K562 (cell line): ENCODE measurements at regions of chr12 and their contacts with region 1.

Region 1: DNA sequence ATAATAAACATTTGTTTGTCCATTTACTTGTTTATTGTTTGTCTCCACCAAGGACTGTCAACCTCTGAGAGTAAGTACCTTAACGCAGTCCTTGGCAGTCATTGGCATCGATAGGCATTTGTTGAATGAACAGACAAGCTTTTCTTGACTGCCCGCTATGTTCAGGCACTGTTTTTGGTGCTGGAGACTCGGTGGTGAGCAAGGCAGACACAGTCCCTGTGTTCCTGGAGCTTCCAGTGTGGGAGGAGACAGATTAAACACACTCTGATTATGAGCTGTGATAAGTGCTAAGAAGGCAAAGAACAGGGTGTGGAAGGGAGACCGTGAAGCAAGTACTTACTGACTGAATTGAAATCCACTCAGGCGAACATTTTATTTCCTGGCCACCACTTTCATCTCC is 1.2 kb downstream of the ATP6V0A2 start:
- DNase-seq: peak in 3 of 4 experiments; percentile 30 to 80 (median 65)
- ATAC-seq: peak; percentile 50
- H3K4me3 ChIP-seq: peak overlapping the region; percentile 95
- H3K27ac ChIP-seq: peak overlapping the region; percentile 80
- H3K4me1 ChIP-seq: peaks cover 29 to 31% of the 10 kb centered on the region in 2 experiments
- H3K27me3 ChIP-seq: no peaks in the 10 kb centered on the region
- CTCF ChIP-seq: no peak
- EP300 ChIP-seq: peak; percentile 33
- POLR2A ChIP-seq: 0 out of 2 replicates have a peak, but pooled peaks have one; percentile 26
- RAD21 ChIP-seq: no peak

Region 2: GRCh38 chr12:123546281-123546680 is 167.1 kb before region 1 on chr12:
- CTCF ChIA-PET with region 1: no interaction called
- POLR2A ChIA-PET with region 1: no interaction called
- in situ Hi-C with region 1: no loop called
- intact Hi-C with region 1: no loop called
- DNase-seq: peak in 1 of 4 experiments; percentile 29
- ATAC-seq: peak; percentile 67
- H3K4me3 ChIP-seq: no peak overlapping the region
- H3K27ac ChIP-seq: no peak overlapping the region
- H3K4me1 ChIP-seq: peaks cover 0 to 3% of the 10 kb centered on the region in 2 experiments; a peak in 1 of 5 replicates
- H3K27me3 ChIP-seq: peaks cover 0 to 4% of the 10 kb centered on the region in 2 experiments; a peak in 1 of 5 replicates
- CTCF ChIP-seq: no peak
- EP300 ChIP-seq: no peak
- POLR2A ChIP-seq: no peak
- RAD21 ChIP-seq: no peak

Region 3: GRCh38 chr12:123571343-123571813 is 142.0 kb before region 1 on chr12:
- CTCF ChIA-PET with region 1: no interaction called
- POLR2A ChIA-PET with region 1: no interaction called
- in situ Hi-C with region 1: no loop called
- intact Hi-C with region 1: no loop called
- DNase-seq: peak; percentile 36 to 61 (median 44)
- ATAC-seq: peak; percentile 94
- H3K4me3 ChIP-seq: no peak overlapping the region
- H3K27ac ChIP-seq: no peak overlapping the region
- H3K4me1 ChIP-seq: peaks cover 0 to 3% of the 10 kb centered on the region in 2 experiments; a peak in 1 of 5 replicates
- H3K27me3 ChIP-seq: no peaks in the 10 kb centered on the region
- CTCF ChIP-seq: no peak
- EP300 ChIP-seq: no peak
- POLR2A ChIP-seq: no peak
- RAD21 ChIP-seq: no peak

Region 4: GRCh38 chr12:123633379-123634141 is 79.8 kb before region 1 on chr12 and contains the starts of genes EIF2B1 and GTF2H3:
- CTCF ChIA-PET with region 1: no interaction called
- POLR2A ChIA-PET with region 1: interaction called, 3 read pairs
- in situ Hi-C with region 1: no loop called
- intact Hi-C with region 1: loop called (anchors 5 kb)
- DNase-seq: peak; percentile 91 to 99 (median 94)
- ATAC-seq: peak; percentile 97
- H3K4me3 ChIP-seq: peak within 1 kb of the TSS; percentile 97
- H3K27ac ChIP-seq: peak within 1 kb of the TSS; percentile 96
- H3K4me1 ChIP-seq: peaks cover 0 to 7% of the 10 kb centered on the region in 2 experiments; a peak in 2 of 5 replicates
- H3K27me3 ChIP-seq: no peaks in the 10 kb centered on the region
- CTCF ChIP-seq: 0 out of 6 replicates have a peak, but pooled peaks of 1 of the 3 experiments have one; percentile 16
- EP300 ChIP-seq: peak; percentile 68
- POLR2A ChIP-seq: peak; percentile 99
- RAD21 ChIP-seq: no peak; a peak in 1 of 4 replicates
- polyA plus RNA-seq, gene EIF2B1: 35.7 to 43.8 TPM
- polyA plus RNA-seq, gene GTF2H3: 34.2 to 39.3 TPM